Naive thymus-derived CD4-positive, alpha-beta T cell (primary cell): ENCODE measurements at regions of chr20 and their contacts with region 1.

Region 1: DNA sequence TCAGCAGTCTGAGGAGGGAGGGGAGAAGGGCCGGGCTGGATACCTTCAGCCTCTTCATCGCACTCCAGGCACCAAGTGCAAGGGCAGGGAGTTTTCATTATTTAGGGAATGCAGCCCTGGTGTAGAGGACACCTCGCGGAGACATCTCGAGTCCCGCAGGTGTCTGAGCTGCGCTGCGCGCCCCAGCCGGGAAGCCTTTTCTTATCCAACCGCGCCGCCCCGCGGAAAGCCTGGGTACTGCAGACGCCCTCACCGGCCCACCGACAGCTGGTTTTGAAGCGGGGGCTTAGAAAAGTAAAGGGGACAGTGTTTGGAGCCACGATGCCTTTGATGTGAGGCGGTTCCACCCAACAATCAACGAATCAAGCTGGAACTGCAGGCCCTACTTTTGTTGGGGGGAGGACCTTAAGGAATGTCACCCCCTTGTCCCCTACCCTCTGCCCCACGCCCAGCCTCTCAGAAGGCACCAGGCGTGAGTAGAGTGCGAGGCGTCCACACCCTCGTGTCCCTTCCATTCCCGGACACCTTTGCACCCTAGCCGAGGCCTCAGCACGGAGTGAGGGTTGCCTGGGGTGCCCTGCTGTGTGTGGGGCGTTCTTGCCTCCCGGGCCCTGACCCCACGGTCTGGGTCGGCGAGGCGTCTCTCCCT is 8.6 kb downstream of the NKX2-2 start:
- DNase-seq: peak; percentile 51 to 86 (median 76)
- ATAC-seq: peak; percentile 82
- H3K4me3 ChIP-seq: peak overlapping the region; percentile 55
- H3K4me3 Mint-ChIP-seq: peak overlapping the region; percentile 53 to 80 (median 72)
- H3K27ac ChIP-seq: no peak overlapping the region
- H3K27ac Mint-ChIP-seq: peak overlapping the region in 2 of 9 donors; percentile 20 to 74
- H3K4me1 ChIP-seq: peaks cover 10 to 16% of the 10 kb centered on the region in 2 donors
- H3K4me1 Mint-ChIP-seq: peaks cover 0 to 40% (median 32%) of the 10 kb centered on the region in 7 donors
- H3K27me3 ChIP-seq: peaks cover 7 to 29% of the 10 kb centered on the region in 2 donors
- H3K27me3 Mint-ChIP-seq: peaks cover 52 to 60% (median 55%) of the 10 kb centered on the region in 5 donors

Region 2: GRCh38 chr20:20837574-20838021 is 667.7 kb before region 1 on chr20:
- CTCF ChIA-PET with region 1: interaction called, 3 read pairs
- POLR2A ChIA-PET with region 1: no interaction called
- intact Hi-C with region 1: loop called (anchors 1 kb)
- DNase-seq: peak in 6 of 9 donors; percentile 4 to 25 (median 19)
- ATAC-seq: peak; percentile 50
- H3K4me3 ChIP-seq: no peak overlapping the region
- H3K4me3 Mint-ChIP-seq: peak overlapping the region in 2 of 10 donors; percentile 13 to 49
- H3K27ac ChIP-seq: no peak overlapping the region
- H3K27ac Mint-ChIP-seq: no peak overlapping the region
- H3K4me1 ChIP-seq: no peaks in the 10 kb centered on the region
- H3K4me1 Mint-ChIP-seq: peaks cover 0 to 5% (median 4%) of the 10 kb centered on the region in 7 donors
- H3K27me3 ChIP-seq: no peaks in the 10 kb centered on the region
- H3K27me3 Mint-ChIP-seq: peaks cover 13 to 32% (median 30%) of the 10 kb centered on the region in 5 donors

Region 3: DNA sequence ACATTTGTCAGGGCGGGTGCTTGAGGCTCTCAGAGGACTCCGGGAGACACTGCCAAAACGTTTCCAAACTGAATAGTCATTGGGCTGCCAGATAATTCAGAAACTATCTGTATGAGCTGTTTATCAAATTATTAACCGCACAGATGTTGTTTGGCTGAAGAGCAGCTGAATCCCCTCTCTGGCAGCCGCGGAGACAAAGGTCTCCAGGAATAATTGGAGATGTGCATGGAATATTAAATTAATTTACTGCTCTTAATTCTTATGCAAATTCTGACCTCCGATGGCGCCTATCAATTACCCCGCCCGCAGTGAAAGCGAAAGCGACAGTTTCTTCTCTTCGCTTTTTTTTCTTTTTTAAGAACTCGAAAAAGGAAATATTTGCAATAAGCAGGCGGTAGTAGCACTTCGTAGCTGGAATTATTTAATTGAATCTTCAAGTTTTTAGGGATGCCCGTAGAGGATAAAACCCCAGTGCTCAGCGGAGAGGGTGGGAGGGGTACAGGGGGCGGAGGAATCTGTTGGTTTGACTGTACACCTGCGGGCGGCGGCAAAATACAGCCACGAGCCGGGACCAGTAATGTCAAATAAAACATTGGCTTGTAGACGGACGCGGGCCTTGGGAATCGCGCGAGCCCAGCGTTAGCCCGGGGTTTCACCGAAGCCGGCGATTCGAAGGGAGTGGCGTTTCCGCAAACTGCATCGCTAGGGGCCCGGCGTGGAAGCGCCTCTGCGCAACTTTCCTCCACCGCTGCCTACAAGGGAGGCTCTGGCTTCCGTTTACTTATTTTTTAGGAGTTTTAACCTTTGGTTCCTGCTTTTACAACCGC is 405.3 kb before region 1 on chr20:
- CTCF ChIA-PET with region 1: no interaction called
- POLR2A ChIA-PET with region 1: no interaction called
- intact Hi-C with region 1: loop called in 1 of 2 experiments (anchors 2 kb)
- DNase-seq: peak in 5 of 9 donors; percentile 32 to 54 (median 40)
- ATAC-seq: peak; percentile 64
- H3K4me3 ChIP-seq: peak overlapping the region; percentile 51
- H3K4me3 Mint-ChIP-seq: peak overlapping the region; percentile 78 to 91 (median 84)
- H3K27ac ChIP-seq: no peak overlapping the region
- H3K27ac Mint-ChIP-seq: peak overlapping the region in 5 of 9 donors; percentile 18 to 90 (median 38)
- H3K4me1 ChIP-seq: peaks cover 20 to 34% of the 10 kb centered on the region in 2 donors
- H3K4me1 Mint-ChIP-seq: peaks cover 16 to 50% (median 45%) of the 10 kb centered on the region in 7 donors
- H3K27me3 ChIP-seq: peaks cover 18 to 59% of the 10 kb centered on the region in 2 donors
- H3K27me3 Mint-ChIP-seq: peaks cover 76 to 93% (median 90%) of the 10 kb centered on the region in 5 donors

Region 4: DNA sequence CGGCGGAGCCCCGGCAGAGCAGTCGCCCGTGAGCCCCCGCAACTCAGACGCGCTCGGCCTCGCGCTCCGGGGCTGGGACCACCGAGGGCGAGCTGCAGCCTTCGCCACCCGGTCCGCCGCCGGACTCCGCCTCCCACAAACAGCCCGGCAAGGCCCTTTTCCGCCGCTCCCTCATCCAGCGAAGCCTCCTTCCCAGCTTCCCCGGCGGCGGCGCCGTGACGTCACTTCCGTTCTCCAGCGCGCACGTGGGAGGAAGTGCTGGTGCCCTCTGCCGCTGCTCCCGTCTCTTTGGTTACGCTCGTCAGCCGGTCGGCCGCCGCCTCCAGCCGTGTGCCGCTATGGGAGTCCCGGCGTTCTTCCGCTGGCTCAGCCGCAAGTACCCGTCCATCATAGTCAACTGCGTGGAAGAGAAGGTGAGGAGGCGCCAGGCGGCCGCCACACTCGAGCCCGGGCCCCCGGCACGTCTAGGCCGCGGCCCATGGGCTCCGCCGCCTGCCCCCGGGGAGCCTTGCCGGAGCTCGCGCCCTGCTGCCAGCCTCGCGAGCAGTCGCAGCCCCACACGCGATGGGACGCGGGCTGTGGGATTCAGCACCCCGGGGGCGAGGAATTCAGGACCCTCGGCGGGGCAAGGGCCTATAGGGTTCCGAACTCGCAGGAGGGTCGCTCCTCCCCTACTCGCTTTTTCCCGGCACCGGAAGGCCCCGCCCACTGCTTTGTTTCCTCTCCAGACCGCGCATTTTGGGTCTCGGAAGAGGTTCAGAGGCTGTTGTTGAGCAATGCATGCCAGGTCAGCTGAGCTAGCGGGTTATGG is 202.0 kb before region 1 on chr20 and contains the start of gene XRN2:
- CTCF ChIA-PET with region 1: no interaction called
- POLR2A ChIA-PET with region 1: no interaction called
- intact Hi-C with region 1: loop called in 1 of 2 experiments (anchors 2 kb)
- DNase-seq: peak; percentile 88 to 97 (median 92)
- ATAC-seq: peak; percentile 91
- H3K4me3 ChIP-seq: peak within 1 kb of the TSS; percentile 84
- H3K4me3 Mint-ChIP-seq: peak within 1 kb of the TSS; percentile 96 to 99 (median 97)
- H3K27ac ChIP-seq: peak within 1 kb of the TSS; percentile 95
- H3K27ac Mint-ChIP-seq: peak within 1 kb of the TSS; percentile 93 to 100 (median 99)
- H3K4me1 ChIP-seq: peaks cover 9 to 19% of the 10 kb centered on the region in 2 donors
- H3K4me1 Mint-ChIP-seq: peaks cover 22 to 39% (median 29%) of the 10 kb centered on the region in 7 donors
- H3K27me3 ChIP-seq: no peaks in the 10 kb centered on the region
- H3K27me3 Mint-ChIP-seq: no peaks in the 10 kb centered on the region
- total RNA-seq, gene XRN2: 51.7 to 71.0 (median 56.5) TPM

Region 5: DNA sequence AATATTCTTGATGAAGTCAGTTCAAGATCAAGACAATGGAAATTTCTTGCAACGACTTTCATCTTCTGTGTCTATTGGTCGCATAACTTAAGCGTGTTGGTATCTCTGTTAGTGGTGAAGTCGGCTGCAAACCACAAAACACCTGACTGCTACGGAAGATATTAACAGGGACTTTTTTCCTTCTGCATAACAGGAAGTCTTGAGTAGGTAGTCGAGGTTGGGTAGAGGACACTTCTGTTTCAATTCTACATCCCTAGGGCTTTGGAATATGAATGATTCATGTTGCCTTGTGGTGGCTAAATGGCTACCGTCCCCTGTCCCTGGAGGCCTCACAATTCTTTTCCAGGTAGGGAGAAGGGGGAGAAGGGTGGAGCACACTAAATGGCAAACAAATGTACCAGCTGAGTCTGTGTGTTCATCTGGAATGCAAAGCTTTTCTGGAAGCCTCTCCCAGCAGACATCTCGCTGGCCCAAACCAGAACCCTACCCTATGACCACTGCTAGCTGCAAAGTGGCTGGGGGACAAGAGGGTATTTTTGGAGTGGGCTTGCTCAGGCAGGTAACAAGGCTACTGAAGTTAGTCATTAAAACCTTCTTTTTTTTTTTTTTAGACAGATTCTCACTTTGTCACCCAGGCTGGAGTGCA is 43.2 kb after region 1 on chr20:
- CTCF ChIA-PET with region 1: no interaction called
- POLR2A ChIA-PET with region 1: no interaction called
- intact Hi-C with region 1: loop called in 1 of 2 experiments (anchors 1 kb)
- DNase-seq: peak in 8 of 9 donors; percentile 43 to 86 (median 82)
- ATAC-seq: peak; percentile 91
- H3K4me3 ChIP-seq: peak overlapping the region; percentile 51
- H3K4me3 Mint-ChIP-seq: peak overlapping the region; percentile 60 to 81 (median 75)
- H3K27ac ChIP-seq: peak overlapping the region; percentile 79
- H3K27ac Mint-ChIP-seq: peak overlapping the region; percentile 88 to 97 (median 94)
- H3K4me1 ChIP-seq: peaks cover 4 to 35% of the 10 kb centered on the region in 2 donors
- H3K4me1 Mint-ChIP-seq: peaks cover 10 to 48% (median 37%) of the 10 kb centered on the region in 7 donors
- H3K27me3 ChIP-seq: no peaks in the 10 kb centered on the region
- H3K27me3 Mint-ChIP-seq: peaks cover 0 to 3% (median 0%) of the 10 kb centered on the region in 5 donors

Region 6: GRCh38 chr20:22127587-22127986 is 622.3 kb after region 1 on chr20:
- CTCF ChIA-PET with region 1: no interaction called
- POLR2A ChIA-PET with region 1: no interaction called
- intact Hi-C with region 1: no loop called
- DNase-seq: no peak
- ATAC-seq: no peak
- H3K4me3 ChIP-seq: no peak overlapping the region
- H3K4me3 Mint-ChIP-seq: no peak overlapping the region
- H3K27ac ChIP-seq: no peak overlapping the region
- H3K27ac Mint-ChIP-seq: no peak overlapping the region
- H3K4me1 ChIP-seq: no peaks in the 10 kb centered on the region
- H3K4me1 Mint-ChIP-seq: no peaks in the 10 kb centered on the region
- H3K27me3 ChIP-seq: no peaks in the 10 kb centered on the region
- H3K27me3 Mint-ChIP-seq: no peaks in the 10 kb centered on the region